Mammary epithelial cell (primary cell): ENCODE measurements at regions of chr4 and their contacts with region 1.

Region 1: GRCh38 chr4:107392951-107393350 is 327.1 kb downstream of the PAPSS1 start:
- DNase-seq: no peak
- H3K4me3 ChIP-seq: no peak overlapping the region
- H3K27ac ChIP-seq: no peak overlapping the region
- H3K4me1 ChIP-seq: no peaks in the 10 kb centered on the region
- H3K27me3 ChIP-seq: no peaks in the 10 kb centered on the region
- CTCF ChIP-seq: no peak

Region 2: GRCh38 chr4:107299646-107300045 is 93.3 kb before region 1 on chr4:
- CTCF ChIA-PET with region 1: no interaction called
- dilution Hi-C with region 1: loop called (anchors 5 kb)
- in situ Hi-C with region 1: no loop called
- intact Hi-C with region 1: no loop called
- DNase-seq: peak; percentile 38
- H3K4me3 ChIP-seq: no peak overlapping the region
- H3K27ac ChIP-seq: no peak overlapping the region
- H3K4me1 ChIP-seq: no peaks in the 10 kb centered on the region
- H3K27me3 ChIP-seq: no peaks in the 10 kb centered on the region
- CTCF ChIP-seq: no peak

Region 3: DNA sequence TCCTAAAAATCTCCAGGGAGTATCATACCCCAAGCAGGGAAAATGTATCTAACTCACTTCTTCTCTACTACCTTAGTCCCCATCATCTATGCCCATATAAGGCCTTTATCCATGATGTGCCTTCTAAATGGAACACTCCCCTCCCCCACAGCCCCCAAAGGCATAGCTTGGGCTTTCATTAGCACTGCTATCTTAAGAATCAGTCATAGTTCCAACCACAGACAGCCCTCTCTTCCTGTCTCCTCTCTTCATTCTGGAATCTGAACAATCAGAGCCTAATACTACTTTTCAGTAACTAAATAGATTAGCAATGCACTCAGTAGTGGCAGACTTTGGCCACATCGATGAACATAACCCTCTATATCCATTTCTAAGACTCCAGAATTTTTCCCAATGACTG is 43.7 kb before region 1 on chr4:
- CTCF ChIA-PET with region 1: no interaction called
- dilution Hi-C with region 1: loop called (anchors 10 kb)
- in situ Hi-C with region 1: no loop called
- intact Hi-C with region 1: no loop called
- DNase-seq: no peak
- H3K4me3 ChIP-seq: no peak overlapping the region
- H3K27ac ChIP-seq: no peak overlapping the region
- H3K4me1 ChIP-seq: peaks cover 8% of the 10 kb centered on the region
- H3K27me3 ChIP-seq: no peaks in the 10 kb centered on the region
- CTCF ChIP-seq: no peak